ENCODE measurements at regions of chrX and their contacts with region 1.

Region 1: GRCh38 chrX:136711147-136711546 is 63.2 kb downstream of the CD40LG start:
- DNase-seq: peak; percentile 76
- H3K4me3 ChIP-seq: no peak overlapping the region
- H3K27ac ChIP-seq: peak overlapping the region in 7 of 8 donors; percentile 7 to 67 (median 61)
- H3K4me1 ChIP-seq: peaks cover 5 to 55% (median 31%) of the 10 kb centered on the region in 6 donors
- H3K27me3 ChIP-seq: no peaks in the 10 kb centered on the region
- CTCF ChIP-seq: peak in 8 of 11 experiments; percentile 24 to 50 (median 43)
- POLR2A ChIP-seq: no peak

Region 2: DNA sequence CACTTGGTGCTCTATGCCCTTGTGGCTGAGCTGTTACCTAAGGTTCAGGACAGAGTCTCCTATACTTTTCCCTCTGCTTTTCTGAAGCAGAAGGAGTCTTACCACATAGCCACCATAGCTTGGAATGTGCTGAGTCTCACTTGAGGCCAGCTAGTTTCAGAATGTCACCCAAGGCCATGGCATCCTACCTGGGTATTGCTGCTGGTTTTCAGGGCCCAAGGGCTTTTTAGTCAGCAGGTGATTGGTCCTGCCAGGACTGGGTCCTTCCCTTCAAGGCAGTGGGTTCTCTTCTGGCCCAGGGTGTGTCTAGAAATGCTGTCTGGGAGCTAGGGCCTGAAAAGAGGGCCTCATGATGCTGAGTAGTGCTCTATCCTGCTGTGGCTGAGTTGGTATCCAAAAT is 146.4 kb before region 1 on chrX:
- intact Hi-C with region 1: no loop called
- DNase-seq: no peak
- H3K4me3 ChIP-seq: no peak overlapping the region
- H3K27ac ChIP-seq: no peak overlapping the region
- H3K4me1 ChIP-seq: no peaks in the 10 kb centered on the region
- H3K27me3 ChIP-seq: peaks cover 0 to 13% (median 0%) of the 10 kb centered on the region in 7 donors
- CTCF ChIP-seq: no peak
- POLR2A ChIP-seq: no peak

Region 3: GRCh38 chrX:136767104-136767941 is 56.2 kb after region 1 on chrX:
- intact Hi-C with region 1: no loop called
- DNase-seq: peak; percentile 93
- H3K4me3 ChIP-seq: peak overlapping the region; percentile 36 to 82 (median 58)
- H3K27ac ChIP-seq: peak overlapping the region; percentile 75 to 95 (median 90)
- H3K4me1 ChIP-seq: peaks cover 6 to 78% (median 32%) of the 10 kb centered on the region in 6 donors
- H3K27me3 ChIP-seq: no peaks in the 10 kb centered on the region
- CTCF ChIP-seq: peak in 9 of 11 experiments; percentile 17 to 58 (median 39)
- POLR2A ChIP-seq: no peak

Region 4: GRCh38 chrX:136920001-136920400 is 208.9 kb after region 1 on chrX:
- intact Hi-C with region 1: loop called (anchors 10 kb)
- DNase-seq: no peak
- H3K4me3 ChIP-seq: no peak overlapping the region
- H3K27ac ChIP-seq: no peak overlapping the region
- H3K4me1 ChIP-seq: peaks cover 0 to 3% (median 0%) of the 10 kb centered on the region in 6 donors
- H3K27me3 ChIP-seq: no peaks in the 10 kb centered on the region
- CTCF ChIP-seq: no peak
- POLR2A ChIP-seq: no peak